ENCODE measurements at regions of chr11 and their contacts with region 1.

Region 1: DNA sequence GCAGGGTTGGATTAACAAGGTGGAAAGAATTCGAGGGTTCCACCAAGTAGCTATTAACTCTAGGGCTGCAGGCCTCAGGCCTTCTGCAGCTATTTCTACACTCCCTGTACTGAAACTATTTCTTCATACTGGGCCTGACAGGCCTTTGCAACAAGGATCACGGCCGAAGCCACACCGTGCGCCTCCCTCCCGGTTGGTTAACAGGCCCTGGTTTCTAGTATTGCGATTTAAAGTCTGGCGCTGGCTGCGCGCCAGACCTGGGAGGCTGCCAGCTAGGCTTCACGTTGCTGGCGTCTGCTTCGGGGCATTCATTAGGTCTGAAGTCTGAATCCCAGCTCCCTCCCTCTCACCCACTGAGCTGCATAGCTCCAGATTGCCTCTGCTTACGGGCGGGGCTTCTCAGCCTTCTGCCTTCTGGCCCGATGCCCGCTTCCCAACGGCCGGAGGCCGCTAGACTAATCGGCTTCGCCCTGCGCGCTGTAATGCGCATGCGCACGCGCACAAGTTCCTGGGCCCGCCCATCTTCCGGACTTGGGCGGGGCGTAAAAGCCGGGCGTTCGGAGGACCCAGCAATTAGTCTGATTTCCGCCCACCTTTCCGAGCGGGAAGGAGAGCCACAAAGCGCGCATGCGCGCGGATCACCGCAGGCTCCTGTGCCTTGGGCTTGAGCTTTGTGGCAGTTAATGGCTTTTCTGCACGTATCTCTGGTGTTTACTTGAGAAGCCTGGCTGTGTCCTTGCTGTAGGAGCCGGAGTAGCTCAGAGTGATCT is 1.6 kb downstream of the LDHA start:
- H3K4me3 Mint-ChIP-seq: peak overlapping the region; percentile 98
- H3K27ac Mint-ChIP-seq: peak overlapping the region; percentile 99
- H3K4me1 Mint-ChIP-seq: peaks cover 11% of the 10 kb centered on the region
- H3K27me3 Mint-ChIP-seq: no peaks in the 10 kb centered on the region

Region 2: DNA sequence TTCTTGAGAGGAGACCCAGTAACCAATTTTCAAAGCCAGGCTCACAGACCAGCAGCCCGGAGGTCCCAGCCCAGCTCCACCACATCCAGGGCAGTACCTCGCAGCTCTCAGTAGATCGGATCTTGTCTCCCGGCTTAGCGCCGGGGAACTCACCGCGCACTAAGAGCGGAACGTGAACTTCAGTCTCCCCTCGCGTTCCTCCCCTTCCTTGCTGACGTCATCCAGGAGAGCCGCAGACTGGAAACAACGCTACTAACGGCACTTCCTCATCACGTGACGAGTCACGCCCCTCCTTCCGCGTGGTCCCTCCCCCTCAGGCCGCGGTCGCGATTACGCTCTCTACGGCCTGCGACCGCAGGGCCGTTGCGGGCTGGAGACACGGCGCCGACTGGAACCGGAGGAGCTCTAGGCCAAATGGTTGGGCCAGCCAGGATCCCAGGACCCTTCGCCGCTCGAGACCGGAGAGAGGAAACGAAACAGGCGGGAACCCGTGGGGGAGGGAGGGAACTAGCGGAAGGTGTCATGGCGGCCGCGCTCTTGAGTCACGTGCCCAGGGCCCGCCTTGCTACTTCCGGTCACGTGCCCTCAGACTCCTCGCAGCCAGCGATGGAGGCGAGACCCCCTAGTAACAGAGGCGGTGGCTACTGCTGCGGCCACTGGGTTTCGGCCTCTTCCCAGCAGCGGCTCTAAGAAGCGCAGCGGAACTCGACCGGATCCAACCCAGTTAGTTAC is 73.8 kb before region 1 on chr11 and contains the starts of genes GTF2H1 and HPS5:
- intact Hi-C with region 1: loop called (anchors 2 kb)
- H3K4me3 Mint-ChIP-seq: peak within 1 kb of the TSS; percentile 92
- H3K27ac Mint-ChIP-seq: peak within 1 kb of the TSS; percentile 98
- H3K4me1 Mint-ChIP-seq: peaks cover 71% of the 10 kb centered on the region
- H3K27me3 Mint-ChIP-seq: no peaks in the 10 kb centered on the region

Region 3: GRCh38 chr11:18364495-18365073 is 31.3 kb before region 1 on chr11:
- intact Hi-C with region 1: loop called (anchors 5 kb)
- H3K4me3 Mint-ChIP-seq: no peak overlapping the region
- H3K27ac Mint-ChIP-seq: no peak overlapping the region
- H3K4me1 Mint-ChIP-seq: peaks cover 5% of the 10 kb centered on the region
- H3K27me3 Mint-ChIP-seq: no peaks in the 10 kb centered on the region

Region 4: GRCh38 chr11:18383388-18384156 is 12.3 kb before region 1 on chr11:
- intact Hi-C with region 1: loop called (anchors 1 kb)
- H3K4me3 Mint-ChIP-seq: peak overlapping the region; percentile 2
- H3K27ac Mint-ChIP-seq: peak overlapping the region; percentile 97
- H3K4me1 Mint-ChIP-seq: peaks cover 24% of the 10 kb centered on the region
- H3K27me3 Mint-ChIP-seq: no peaks in the 10 kb centered on the region

Region 5: DNA sequence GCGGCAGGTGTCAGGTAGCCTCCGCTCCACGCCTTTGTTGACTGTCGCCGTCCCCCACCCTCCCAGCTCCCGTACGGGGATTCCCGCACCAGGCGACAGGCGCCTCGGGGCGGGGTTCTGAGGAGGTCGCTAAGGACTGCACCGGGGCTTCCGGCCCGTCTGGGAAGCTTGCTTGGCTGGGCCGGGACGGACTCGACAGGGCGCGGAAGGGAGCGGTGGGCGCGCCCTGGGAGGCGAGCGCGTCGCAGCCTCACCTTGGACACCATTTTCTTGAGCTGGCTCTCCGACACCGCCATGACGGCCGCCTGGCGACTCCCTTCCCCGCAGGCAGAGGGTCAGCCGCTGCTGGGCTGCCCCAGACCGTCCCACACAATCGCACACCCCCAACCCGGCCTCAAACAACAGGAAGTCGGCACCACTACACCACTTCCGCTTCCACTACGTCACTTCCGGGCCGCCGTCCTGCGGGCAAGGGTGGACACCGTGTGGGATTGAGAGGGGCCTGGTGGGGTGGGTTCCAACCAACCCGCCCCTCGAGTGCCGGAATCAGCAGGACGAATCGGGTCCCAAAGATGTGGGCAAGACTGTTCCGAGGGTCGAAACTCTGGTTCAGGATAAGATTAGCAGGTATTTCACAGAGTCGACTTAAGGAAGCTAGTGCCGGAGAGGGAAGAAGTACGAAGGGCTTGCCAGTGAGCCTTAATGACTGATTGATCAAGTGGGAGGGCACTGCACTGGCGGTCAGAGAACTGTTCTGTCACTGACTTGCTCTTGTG is 130.8 kb after region 1 on chr11 and contains the start of gene TSG101:
- intact Hi-C with region 1: loop called (anchors 2 kb)
- H3K4me3 Mint-ChIP-seq: peak within 1 kb of the TSS; percentile 99
- H3K27ac Mint-ChIP-seq: peak within 1 kb of the TSS; percentile 99
- H3K4me1 Mint-ChIP-seq: peaks cover 21% of the 10 kb centered on the region
- H3K27me3 Mint-ChIP-seq: no peaks in the 10 kb centered on the region